CD4-positive, alpha-beta memory T cell (primary cell): ENCODE measurements at regions of chr11 and their contacts with region 1.

Region 1: GRCh38 chr11:66677599-66678375 is at the start of gene RBM4B:
- DNase-seq: peak; percentile 95 to 97 (median 96)
- H3K4me3 ChIP-seq: peak within 1 kb of the TSS; percentile 80 to 87
- H3K4me3 Mint-ChIP-seq: peak within 1 kb of the TSS; percentile 91 to 99 (median 96)
- H3K27ac ChIP-seq: peak within 1 kb of the TSS; percentile 98
- H3K27ac Mint-ChIP-seq: peak within 1 kb of the TSS; percentile 98 to 100 (median 99)
- H3K4me1 ChIP-seq: peaks cover 34% of the 10 kb centered on the region
- H3K4me1 Mint-ChIP-seq: peaks cover 21 to 53% (median 34%) of the 10 kb centered on the region in 4 donors
- H3K27me3 ChIP-seq: no peaks in the 10 kb centered on the region
- H3K27me3 Mint-ChIP-seq: no peaks in the 10 kb centered on the region
- total RNA-seq, gene RBM4B: 26.6 to 26.9 TPM

Region 2: GRCh38 chr11:66408488-66409214 is 269.1 kb before region 1 on chr11:
- CTCF ChIA-PET with region 1: interaction called, 52 read pairs
- POLR2A ChIA-PET with region 1: interaction called, 4 read pairs
- intact Hi-C with region 1: loop called (anchors 1 kb)
- DNase-seq: peak; percentile 86 to 92 (median 89)
- H3K4me3 ChIP-seq: peak overlapping the region in 1 of 2 donors; percentile 70
- H3K4me3 Mint-ChIP-seq: peak overlapping the region; percentile 76 to 91 (median 80)
- H3K27ac ChIP-seq: no peak overlapping the region
- H3K27ac Mint-ChIP-seq: peak overlapping the region in 5 of 7 donors; percentile 36 to 89 (median 80)
- H3K4me1 ChIP-seq: peaks cover 5% of the 10 kb centered on the region
- H3K4me1 Mint-ChIP-seq: peaks cover 3 to 5% (median 4%) of the 10 kb centered on the region in 4 donors
- H3K27me3 ChIP-seq: no peaks in the 10 kb centered on the region
- H3K27me3 Mint-ChIP-seq: peaks cover 0 to 33% of the 10 kb centered on the region in 2 donors

Region 3: GRCh38 chr11:66466225-66467027 is 211.4 kb before region 1 on chr11 and contains the start of gene PELI3:
- CTCF ChIA-PET with region 1: interaction called, 4 read pairs
- POLR2A ChIA-PET with region 1: interaction called, 13 read pairs
- intact Hi-C with region 1: no loop called
- DNase-seq: peak; percentile 91 to 95 (median 92)
- H3K4me3 ChIP-seq: peak within 1 kb of the TSS; percentile 58 to 65
- H3K4me3 Mint-ChIP-seq: peak within 1 kb of the TSS; percentile 89 to 94 (median 90)
- H3K27ac ChIP-seq: peak within 1 kb of the TSS; percentile 81
- H3K27ac Mint-ChIP-seq: peak within 1 kb of the TSS; percentile 91 to 97 (median 95)
- H3K4me1 ChIP-seq: peaks cover 20% of the 10 kb centered on the region
- H3K4me1 Mint-ChIP-seq: peaks cover 13 to 33% (median 21%) of the 10 kb centered on the region in 4 donors
- H3K27me3 ChIP-seq: no peaks in the 10 kb centered on the region
- H3K27me3 Mint-ChIP-seq: no peaks in the 10 kb centered on the region
- total RNA-seq, gene PELI3: 25.3 to 25.9 TPM

Region 4: DNA sequence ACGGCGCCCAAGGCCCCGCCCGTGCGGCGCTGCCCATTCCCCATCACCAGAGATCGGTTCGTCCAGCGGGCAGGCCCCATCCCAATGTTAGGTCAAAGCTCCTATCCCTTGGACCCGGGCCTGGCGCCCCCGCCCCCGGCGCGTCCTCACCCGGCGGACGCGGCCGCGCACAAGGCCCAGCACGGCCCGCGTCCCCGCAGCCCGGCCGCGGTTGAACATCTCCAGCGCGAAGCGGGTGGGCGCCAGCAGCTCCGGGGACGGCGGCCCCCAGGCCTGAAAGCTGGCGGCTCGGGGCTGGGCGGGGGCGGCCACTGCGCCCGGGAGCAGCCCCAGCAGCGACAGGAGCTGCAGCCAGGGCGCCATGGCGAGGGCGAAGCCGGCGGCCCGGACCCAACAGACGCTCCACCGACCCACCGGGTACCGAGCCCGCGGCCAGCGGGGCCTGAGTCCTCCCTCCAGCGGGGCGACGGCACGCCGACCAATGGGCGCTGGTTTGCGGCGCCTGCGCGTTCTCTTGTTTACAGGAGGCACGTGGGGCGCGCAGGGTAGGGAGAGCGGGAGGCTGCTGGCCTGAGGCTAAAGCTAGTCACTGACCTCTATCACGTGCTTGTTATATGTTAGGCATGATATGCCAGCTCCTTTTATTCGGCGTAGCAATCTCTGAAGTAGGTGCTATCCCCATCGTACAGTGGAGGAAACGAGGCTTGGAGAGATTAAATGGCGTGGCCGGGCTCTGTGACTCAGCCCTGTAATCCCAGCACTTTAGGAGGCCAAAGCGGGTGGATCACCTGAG is 109.5 kb before region 1 on chr11 and contains the start of gene CTSF:
- CTCF ChIA-PET with region 1: interaction called, 29 read pairs
- POLR2A ChIA-PET with region 1: interaction called, 41 read pairs
- intact Hi-C with region 1: no loop called
- DNase-seq: peak; percentile 49 to 72 (median 56)
- H3K4me3 ChIP-seq: peak within 1 kb of the TSS in 1 of 2 donors; percentile 50
- H3K4me3 Mint-ChIP-seq: peak within 1 kb of the TSS; percentile 73 to 87 (median 82)
- H3K27ac ChIP-seq: peak within 1 kb of the TSS; percentile 25
- H3K27ac Mint-ChIP-seq: peak within 1 kb of the TSS in 4 of 7 donors; percentile 48 to 85 (median 68)
- H3K4me1 ChIP-seq: peaks cover 7% of the 10 kb centered on the region
- H3K4me1 Mint-ChIP-seq: peaks cover 2 to 13% (median 6%) of the 10 kb centered on the region in 4 donors
- H3K27me3 ChIP-seq: no peaks in the 10 kb centered on the region
- H3K27me3 Mint-ChIP-seq: peaks cover 0 to 6% of the 10 kb centered on the region in 2 donors
- total RNA-seq, gene CTSF: 28.1 to 31.7 TPM

Region 5: DNA sequence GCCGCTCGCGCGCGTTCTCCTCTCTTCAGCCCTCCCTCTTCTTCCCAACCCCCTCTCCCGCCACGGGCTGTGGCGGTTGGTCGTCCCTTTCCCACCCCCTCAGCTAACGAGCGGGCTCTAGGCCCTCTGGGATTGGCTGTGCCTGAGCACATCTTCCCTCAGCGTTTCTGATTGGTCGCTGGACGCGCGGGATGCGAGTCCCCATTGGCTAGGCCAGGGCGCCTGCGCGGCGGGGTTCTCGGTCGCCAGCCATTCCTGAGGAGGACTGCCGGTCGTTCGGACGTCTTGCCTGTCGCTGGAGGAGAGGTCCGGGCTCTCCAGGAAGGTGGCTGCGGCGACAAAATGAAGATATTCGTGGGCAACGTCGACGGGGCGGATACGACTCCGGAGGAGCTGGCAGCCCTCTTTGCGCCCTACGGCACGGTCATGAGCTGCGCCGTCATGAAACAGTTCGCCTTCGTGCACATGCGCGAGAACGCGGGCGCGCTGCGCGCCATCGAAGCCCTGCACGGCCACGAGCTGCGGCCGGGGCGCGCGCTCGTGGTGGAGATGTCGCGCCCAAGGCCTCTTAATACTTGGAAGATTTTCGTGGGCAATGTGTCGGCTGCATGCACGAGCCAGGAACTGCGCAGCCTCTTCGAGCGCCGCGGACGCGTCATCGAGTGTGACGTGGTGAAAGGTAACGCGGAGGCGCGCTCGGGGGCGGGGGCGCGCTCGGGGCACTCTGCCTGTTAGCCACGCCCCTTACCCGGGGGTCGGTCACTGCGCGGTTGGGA is 61.2 kb before region 1 on chr11 and contains the start of gene RBM14:
- CTCF ChIA-PET with region 1: interaction called, 13 read pairs
- POLR2A ChIA-PET with region 1: interaction called, 99 read pairs
- intact Hi-C with region 1: loop called (anchors 1 kb)
- DNase-seq: peak; percentile 99 to 100 (median 99)
- H3K4me3 ChIP-seq: peak within 1 kb of the TSS; percentile 70 to 99
- H3K4me3 Mint-ChIP-seq: peak within 1 kb of the TSS; percentile 96 to 100 (median 98)
- H3K27ac ChIP-seq: peak within 1 kb of the TSS; percentile 97
- H3K27ac Mint-ChIP-seq: peak within 1 kb of the TSS; percentile 98 to 100 (median 99)
- H3K4me1 ChIP-seq: peaks cover 40% of the 10 kb centered on the region
- H3K4me1 Mint-ChIP-seq: peaks cover 30 to 63% (median 40%) of the 10 kb centered on the region in 4 donors
- H3K27me3 ChIP-seq: no peaks in the 10 kb centered on the region
- H3K27me3 Mint-ChIP-seq: no peaks in the 10 kb centered on the region
- total RNA-seq, gene RBM14: 158 to 196 TPM

Region 6: GRCh38 chr11:66659763-66660162 is 18.0 kb before region 1 on chr11:
- CTCF ChIA-PET with region 1: interaction called, 10 read pairs
- POLR2A ChIA-PET with region 1: interaction called, 10 read pairs
- intact Hi-C with region 1: no loop called
- DNase-seq: no peak
- H3K4me3 ChIP-seq: no peak overlapping the region
- H3K4me3 Mint-ChIP-seq: no peak overlapping the region
- H3K27ac ChIP-seq: no peak overlapping the region
- H3K27ac Mint-ChIP-seq: peak overlapping the region in 5 of 7 donors; percentile 3 to 74 (median 63)
- H3K4me1 ChIP-seq: no peaks in the 10 kb centered on the region
- H3K4me1 Mint-ChIP-seq: peaks cover 10 to 22% (median 12%) of the 10 kb centered on the region in 4 donors
- H3K27me3 ChIP-seq: no peaks in the 10 kb centered on the region
- H3K27me3 Mint-ChIP-seq: no peaks in the 10 kb centered on the region